H1 (cell line): ENCODE measurements at regions of chr7 and their contacts with region 1.

Region 1: DNA sequence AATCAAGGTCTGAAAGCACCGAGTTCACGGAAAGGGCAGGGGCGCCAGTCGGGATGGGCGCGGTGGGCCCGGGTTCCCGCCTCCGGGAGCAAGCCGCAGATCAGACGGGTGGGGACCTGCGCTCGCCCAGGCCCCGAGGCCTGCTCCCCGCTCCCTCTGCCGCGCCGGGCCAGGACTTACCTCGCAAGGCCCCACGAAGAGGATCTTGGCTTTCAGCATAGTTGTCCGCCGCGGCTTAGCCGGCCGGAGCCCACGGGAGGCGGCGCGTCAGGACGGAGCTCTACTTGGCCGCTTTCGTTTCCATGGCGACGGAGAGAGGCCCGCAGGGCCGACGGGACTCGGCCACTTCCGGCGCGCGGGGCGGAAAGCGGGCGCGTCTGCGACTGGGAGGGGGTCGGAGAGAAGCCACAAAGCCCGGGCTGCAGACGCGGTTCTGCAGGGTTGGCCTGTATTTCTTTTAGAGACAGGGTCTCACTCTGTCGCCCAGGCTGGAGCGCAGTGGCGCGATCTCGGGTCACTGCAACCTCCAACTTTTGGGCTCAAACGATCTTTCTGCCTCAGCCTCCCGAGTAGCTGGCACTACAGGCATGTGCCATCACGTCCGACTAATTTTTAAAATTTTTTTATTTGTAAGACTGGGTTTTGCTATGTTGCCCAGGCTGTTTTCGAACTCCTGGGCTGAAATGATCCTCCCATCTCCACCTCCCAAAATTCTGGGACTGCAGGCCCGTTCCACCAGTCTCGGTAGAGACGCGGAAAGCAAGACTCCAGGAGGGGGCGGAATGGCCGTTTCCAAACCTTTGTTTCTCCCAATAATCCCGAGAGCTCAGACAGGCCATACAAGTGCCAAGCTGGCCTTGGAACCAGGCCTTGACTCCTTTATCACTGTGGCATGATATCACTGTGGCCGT is at the start of gene IFT22:
- DNase-seq: peak in 1 of 2 experiments; percentile 94
- H3K4me3 ChIP-seq: peak within 1 kb of the TSS; percentile 74 to 89 (median 80)
- H3K27ac ChIP-seq: peak within 1 kb of the TSS; percentile 71
- H3K4me1 ChIP-seq: peaks cover 0 to 5% (median 1%) of the 10 kb centered on the region in 4 experiments; a peak in 1 of 7 replicates
- H3K27me3 ChIP-seq: no peaks in the 10 kb centered on the region
- CTCF ChIP-seq: peak; percentile 31 to 50 (median 50)
- EP300 ChIP-seq: no peak
- POLR2A ChIP-seq: peak in 1 of 2 experiments; percentile 91; a peak in 2 of 3 replicates
- RAD21 ChIP-seq: peak; percentile 48 to 69
- total RNA-seq, gene IFT22: 17.7 and 17.8 TPM in 2 replicates

Region 2: GRCh38 chr7:101299511-101300464 is 22.0 kb before region 1 on chr7:
- CTCF ChIA-PET with region 1: interaction called, 11 read pairs
- POLR2A ChIA-PET with region 1: interaction called, 68 read pairs
- DNase-seq: peak in 1 of 2 experiments; percentile 73
- H3K4me3 ChIP-seq: peak overlapping the region; percentile 69 to 97 (median 74)
- H3K27ac ChIP-seq: peak overlapping the region; percentile 74; the same call in 1 of the 2 replicates
- H3K4me1 ChIP-seq: peaks cover 6 to 18% (median 9%) of the 10 kb centered on the region in 4 experiments
- H3K27me3 ChIP-seq: no peaks in the 10 kb centered on the region
- CTCF ChIP-seq: no peak
- EP300 ChIP-seq: no peak
- POLR2A ChIP-seq: peak; percentile 26 to 64
- RAD21 ChIP-seq: no peak; a peak in 1 of 4 replicates

Region 3: DNA sequence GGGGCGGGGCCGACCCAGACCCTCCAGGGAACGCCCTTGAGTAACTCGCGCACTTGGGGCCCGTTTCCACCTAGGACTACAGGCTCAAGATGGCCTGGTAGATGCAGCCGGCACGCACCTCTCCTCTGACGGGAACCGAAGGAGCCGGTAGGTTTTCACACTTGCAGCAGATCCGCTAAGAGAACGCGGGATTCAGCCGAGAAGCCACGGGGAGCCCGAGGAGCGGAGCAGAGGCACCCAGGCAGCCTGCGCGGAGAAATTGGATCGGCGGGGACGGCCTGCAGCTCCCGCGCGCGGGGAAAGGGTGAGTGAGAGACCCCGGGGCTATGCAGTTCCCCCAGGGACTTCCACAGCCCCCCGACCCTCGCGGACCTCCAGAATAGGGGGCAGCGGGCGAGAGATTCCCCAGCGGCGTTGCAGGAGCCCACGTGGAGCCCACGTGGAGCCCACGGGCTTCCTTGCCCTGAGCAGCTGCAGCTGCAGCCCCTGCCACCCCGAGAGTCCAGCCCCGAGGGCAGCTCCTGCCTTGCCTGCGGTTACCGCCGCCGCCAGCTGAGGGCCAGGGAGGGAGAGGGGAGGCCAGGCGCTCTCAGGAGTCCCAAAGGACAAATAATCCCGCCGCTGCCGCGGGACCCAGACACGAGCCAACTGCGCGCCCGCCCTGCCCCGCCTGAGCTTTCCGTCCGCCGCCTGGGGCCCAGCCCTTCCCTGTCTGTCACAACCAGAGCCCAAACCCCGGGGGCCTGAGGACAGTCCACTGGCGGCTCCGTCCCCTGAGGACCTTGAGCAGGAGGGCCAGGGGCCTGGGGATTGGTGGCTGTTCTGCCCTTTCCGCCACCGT is 13.3 kb before region 1 on chr7:
- CTCF ChIA-PET with region 1: interaction called, 6 read pairs
- POLR2A ChIA-PET with region 1: interaction called, 68 read pairs
- DNase-seq: peak in 1 of 2 experiments; percentile 89
- H3K4me3 ChIP-seq: peak overlapping the region; percentile 80 to 96 (median 86)
- H3K27ac ChIP-seq: peak overlapping the region; percentile 79; the same call in 1 of the 2 replicates
- H3K4me1 ChIP-seq: peaks cover 0 to 6% (median 3%) of the 10 kb centered on the region in 4 experiments; a peak in 2 of 7 replicates
- H3K27me3 ChIP-seq: no peaks in the 10 kb centered on the region
- CTCF ChIP-seq: no peak
- EP300 ChIP-seq: no peak
- POLR2A ChIP-seq: peak; percentile 86 to 90
- RAD21 ChIP-seq: no peak

Region 4: GRCh38 chr7:101332026-101332425 is 10.3 kb after region 1 on chr7:
- CTCF ChIA-PET with region 1: interaction called, 4 read pairs
- POLR2A ChIA-PET with region 1: interaction called, 10 read pairs
- DNase-seq: no peak
- H3K4me3 ChIP-seq: no peak overlapping the region
- H3K27ac ChIP-seq: no peak overlapping the region
- H3K4me1 ChIP-seq: no peaks in the 10 kb centered on the region
- H3K27me3 ChIP-seq: no peaks in the 10 kb centered on the region
- CTCF ChIP-seq: no peak
- EP300 ChIP-seq: no peak
- POLR2A ChIP-seq: no peak
- RAD21 ChIP-seq: no peak

Region 5: GRCh38 chr7:101436857-101437576 is 115.3 kb after region 1 on chr7:
- CTCF ChIA-PET with region 1: interaction called, 28 read pairs
- POLR2A ChIA-PET with region 1: interaction called, 8 read pairs
- DNase-seq: peak; percentile 44 to 91
- H3K4me3 ChIP-seq: no peak overlapping the region
- H3K27ac ChIP-seq: no peak overlapping the region
- H3K4me1 ChIP-seq: peaks cover 4 to 19% (median 11%) of the 10 kb centered on the region in 4 experiments
- H3K27me3 ChIP-seq: no peaks in the 10 kb centered on the region
- CTCF ChIP-seq: no peak
- EP300 ChIP-seq: no peak
- POLR2A ChIP-seq: no peak
- RAD21 ChIP-seq: no peak

Region 6: GRCh38 chr7:101602484-101603241 is 280.9 kb after region 1 on chr7:
- CTCF ChIA-PET with region 1: no interaction called
- POLR2A ChIA-PET with region 1: no interaction called
- DNase-seq: peak; percentile 77 to 97
- H3K4me3 ChIP-seq: no peak overlapping the region
- H3K27ac ChIP-seq: no peak overlapping the region
- H3K4me1 ChIP-seq: peaks cover 0 to 6% (median 6%) of the 10 kb centered on the region in 4 experiments; a peak in 5 of 7 replicates
- H3K27me3 ChIP-seq: no peaks in the 10 kb centered on the region
- CTCF ChIP-seq: peak; percentile 89 to 97 (median 91)
- EP300 ChIP-seq: peak in 1 of 2 experiments; percentile 23; a peak in 1 of 3 replicates
- POLR2A ChIP-seq: no peak
- RAD21 ChIP-seq: peak; percentile 97